ENCODE measurements at regions of chr12 and their contacts with region 1.

Region 1: GRCh38 chr12:59087077-59087673 is 166.9 kb upstream of the LRIG3 start:
- DNase-seq: no peak
- H3K4me3 ChIP-seq: no peak overlapping the region
- H3K27ac ChIP-seq: no peak overlapping the region
- H3K4me1 ChIP-seq: no peaks in the 10 kb centered on the region
- H3K27me3 ChIP-seq: no peaks in the 10 kb centered on the region
- CTCF ChIP-seq: peak in 3 of 4 experiments; percentile 49 to 62 (median 53)
- POLR2A ChIP-seq: no peak

Region 2: DNA sequence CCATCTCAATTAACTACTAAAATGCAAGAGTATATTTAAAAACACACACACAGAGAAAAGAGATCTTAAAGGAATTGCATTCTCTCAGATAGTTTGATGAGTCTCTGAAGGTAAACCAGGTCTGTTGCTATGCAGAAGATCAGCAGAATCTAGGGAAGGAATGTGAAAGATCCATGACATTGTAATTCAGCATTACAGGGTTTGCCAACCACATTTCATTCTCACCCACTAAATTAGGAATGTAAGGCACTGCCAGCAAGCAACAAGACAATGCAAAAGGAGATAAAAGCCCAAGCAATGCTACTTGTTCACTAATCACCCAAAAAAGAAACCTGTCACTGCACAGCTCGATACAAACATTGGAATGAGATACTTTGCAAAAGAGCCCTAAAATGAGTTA is 273.1 kb before region 1 on chr12:
- intact Hi-C with region 1: loop called (anchors 10 kb)
- DNase-seq: no peak
- H3K4me3 ChIP-seq: no peak overlapping the region
- H3K27ac ChIP-seq: no peak overlapping the region
- H3K4me1 ChIP-seq: no peaks in the 10 kb centered on the region
- H3K27me3 ChIP-seq: no peaks in the 10 kb centered on the region
- CTCF ChIP-seq: no peak
- POLR2A ChIP-seq: no peak

Region 3: GRCh38 chr12:58980768-58981167 is 106.4 kb before region 1 on chr12:
- intact Hi-C with region 1: no loop called
- DNase-seq: no peak
- H3K4me3 ChIP-seq: no peak overlapping the region
- H3K27ac ChIP-seq: no peak overlapping the region
- H3K4me1 ChIP-seq: no peaks in the 10 kb centered on the region
- H3K27me3 ChIP-seq: no peaks in the 10 kb centered on the region
- CTCF ChIP-seq: no peak
- POLR2A ChIP-seq: no peak